Astrocyte of the cerebellum (primary cell): ENCODE measurements at regions of chr1 and their contacts with region 1.

Region 1: GRCh38 chr1:222663431-222663934 is 45.6 kb downstream of the MIA3 start:
- DNase-seq: no peak
- H3K4me3 ChIP-seq: no peak overlapping the region
- CTCF ChIP-seq: no peak

Region 2: GRCh38 chr1:222728746-222729145 is 65.3 kb after region 1 on chr1:
- in situ Hi-C with region 1: loop called (anchors 5 kb)
- DNase-seq: no peak
- H3K4me3 ChIP-seq: no peak overlapping the region
- CTCF ChIP-seq: no peak